ENCODE measurements at regions of chr11 and their contacts with region 1.

Region 1: DNA sequence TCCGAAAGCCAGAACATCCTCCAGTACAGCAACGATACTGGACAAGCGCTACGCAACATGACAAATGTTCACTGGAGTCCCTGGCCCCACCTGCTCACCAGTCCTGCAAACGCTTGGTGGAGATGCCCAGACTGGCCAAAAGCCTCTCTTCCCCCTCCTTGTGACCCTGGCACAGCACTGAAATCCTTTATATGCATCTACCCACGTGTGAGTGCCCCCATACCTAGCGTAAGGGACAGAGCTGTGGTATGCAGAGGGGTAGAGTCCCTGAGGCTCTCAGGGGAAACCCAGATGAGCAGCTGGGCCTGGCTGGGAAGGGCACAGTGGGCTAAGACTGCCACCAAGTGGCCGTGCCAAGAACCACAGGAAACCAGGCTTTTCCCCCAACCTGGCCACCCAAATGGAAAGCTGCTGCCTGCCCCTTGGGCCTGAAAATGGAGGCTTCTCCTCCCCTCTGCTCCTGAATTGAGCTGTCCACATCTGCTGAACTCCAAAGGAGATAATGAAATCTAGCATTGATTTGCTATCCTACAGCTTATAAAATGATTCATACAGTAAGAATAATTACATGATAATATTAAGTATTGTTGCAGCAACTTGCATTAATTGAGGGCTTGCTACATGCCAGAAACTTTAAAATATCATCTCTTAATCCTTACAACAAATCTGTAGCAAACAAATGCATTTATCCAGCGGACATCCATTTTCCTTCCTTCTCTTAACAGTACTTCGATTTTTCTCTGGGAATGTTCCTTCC is 24.8 kb upstream of the TTC12 start:
- DNase-seq: peak; percentile 78
- ATAC-seq: peak; percentile 98
- H3K4me3 ChIP-seq: no peak overlapping the region
- H3K4me3 Mint-ChIP-seq: no peak overlapping the region
- H3K27ac ChIP-seq: no peak overlapping the region
- H3K27ac Mint-ChIP-seq: no peak overlapping the region
- H3K4me1 ChIP-seq: peaks cover 0 to 5% of the 10 kb centered on the region in 2 donors
- H3K4me1 Mint-ChIP-seq: peaks cover 4% of the 10 kb centered on the region
- H3K27me3 ChIP-seq: peaks cover 0 to 8% (median 0%) of the 10 kb centered on the region in 4 experiments
- H3K27me3 Mint-ChIP-seq: peaks cover 22% of the 10 kb centered on the region
- CTCF ChIP-seq: peak; percentile 87

Region 2: DNA sequence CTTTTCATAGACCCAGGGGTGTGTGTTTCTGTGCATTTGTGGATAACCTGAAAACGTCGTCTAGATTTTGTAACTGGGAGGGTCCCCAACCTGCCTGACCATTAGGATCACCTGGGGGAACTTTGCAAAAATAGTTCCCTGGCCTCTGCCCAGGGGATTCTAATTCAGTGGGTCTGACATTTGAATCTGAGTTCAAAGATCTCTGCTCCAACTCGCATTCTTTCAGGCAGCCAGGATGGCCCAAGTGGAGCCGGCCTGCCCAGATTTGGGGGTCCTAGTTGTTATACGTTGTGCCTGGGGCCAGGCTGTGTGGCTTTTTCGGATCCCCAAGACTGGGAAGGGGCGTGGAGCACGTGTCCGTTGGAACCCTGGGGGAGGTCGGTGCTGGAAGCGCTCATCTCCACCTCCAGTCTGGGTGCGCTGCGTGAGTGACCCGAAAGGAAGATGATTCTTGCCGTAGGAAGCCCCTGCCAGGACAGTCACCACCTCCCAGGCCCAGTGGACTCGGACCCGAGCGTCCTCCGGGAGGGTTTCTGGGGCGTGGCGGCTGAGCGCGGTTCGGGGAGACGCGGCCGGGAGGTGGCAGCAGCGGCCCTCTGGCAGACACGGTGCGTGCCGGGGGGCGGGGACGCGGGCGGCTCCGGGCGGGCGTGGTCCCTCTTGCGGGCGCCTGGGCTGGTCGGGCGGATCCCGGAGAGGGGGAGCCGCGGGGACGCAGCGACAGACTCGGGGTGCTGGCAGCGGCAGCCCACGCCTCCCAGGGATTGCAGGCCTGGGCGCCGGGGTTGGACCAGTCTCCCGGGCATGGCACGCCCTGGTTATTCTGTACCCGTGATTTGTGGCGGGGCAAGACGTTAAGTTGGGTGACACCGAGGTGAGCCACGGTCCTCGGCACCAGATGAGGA is 999.8 kb before region 1 on chr11:
- CTCF ChIA-PET with region 1: interaction called, 22 read pairs
- POLR2A ChIA-PET with region 1: no interaction called
- intact Hi-C with region 1: loop called (anchors 1 kb)
- DNase-seq: peak; percentile 88
- ATAC-seq: peak; percentile 98
- H3K4me3 ChIP-seq: peak overlapping the region in 4 of 5 experiments; percentile 40 to 62 (median 53)
- H3K4me3 Mint-ChIP-seq: peak overlapping the region; percentile 87
- H3K27ac ChIP-seq: peak overlapping the region in 1 of 2 donors; percentile 39
- H3K27ac Mint-ChIP-seq: peak overlapping the region; percentile 85
- H3K4me1 ChIP-seq: peaks cover 9 to 13% of the 10 kb centered on the region in 2 donors
- H3K4me1 Mint-ChIP-seq: peaks cover 11% of the 10 kb centered on the region
- H3K27me3 ChIP-seq: peaks cover 0 to 3% (median 0%) of the 10 kb centered on the region in 4 experiments
- H3K27me3 Mint-ChIP-seq: no peaks in the 10 kb centered on the region
- CTCF ChIP-seq: peak; percentile 89

Region 3: DNA sequence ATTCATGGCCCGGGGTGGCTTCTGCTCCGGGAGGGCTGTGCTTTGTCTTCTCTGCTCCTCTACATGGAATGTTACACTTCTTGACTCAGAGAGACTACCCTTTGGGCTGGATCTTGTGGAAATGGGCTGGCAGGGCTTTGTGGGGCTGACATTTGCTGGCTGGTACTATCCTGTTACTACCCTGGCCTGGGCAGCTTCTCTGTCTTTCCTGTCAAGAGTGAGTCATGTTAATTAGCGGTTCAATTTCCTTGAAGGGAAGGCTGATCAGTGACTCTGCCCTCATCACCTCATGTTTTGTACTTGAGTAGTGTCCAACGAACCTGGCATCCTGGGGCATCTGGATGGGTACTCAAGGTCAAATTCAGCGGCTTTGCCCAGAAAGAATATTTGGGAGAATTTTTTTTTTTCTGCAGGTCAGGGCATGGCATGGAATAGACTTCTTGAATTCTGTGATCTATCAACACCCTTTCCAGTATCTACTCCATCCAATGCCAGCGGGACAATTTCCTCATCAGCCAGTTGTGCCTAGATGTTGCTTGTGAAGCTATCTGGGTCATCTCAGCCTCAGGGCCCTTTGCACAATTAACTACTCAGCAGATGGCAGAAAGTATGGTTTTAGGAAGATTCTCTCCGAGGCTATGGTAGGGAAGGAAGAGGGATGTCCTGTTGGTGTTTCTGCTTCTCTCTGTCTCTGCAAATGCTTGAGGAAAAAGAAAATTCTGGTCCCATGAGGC is 888.4 kb before region 1 on chr11:
- CTCF ChIA-PET with region 1: no interaction called
- POLR2A ChIA-PET with region 1: no interaction called
- intact Hi-C with region 1: no loop called
- DNase-seq: no peak
- ATAC-seq: no peak
- H3K4me3 ChIP-seq: no peak overlapping the region
- H3K4me3 Mint-ChIP-seq: no peak overlapping the region
- H3K27ac ChIP-seq: no peak overlapping the region
- H3K27ac Mint-ChIP-seq: no peak overlapping the region
- H3K4me1 ChIP-seq: no peaks in the 10 kb centered on the region
- H3K4me1 Mint-ChIP-seq: no peaks in the 10 kb centered on the region
- H3K27me3 ChIP-seq: peaks cover 0 to 9% (median 0%) of the 10 kb centered on the region in 4 experiments
- H3K27me3 Mint-ChIP-seq: peaks cover 3% of the 10 kb centered on the region
- CTCF ChIP-seq: no peak

Region 4: GRCh38 chr11:112588252-112588694 is 701.3 kb before region 1 on chr11:
- CTCF ChIA-PET with region 1: interaction called, 122 read pairs
- POLR2A ChIA-PET with region 1: no interaction called
- intact Hi-C with region 1: no loop called
- DNase-seq: peak; percentile 60
- ATAC-seq: peak; percentile 47
- H3K4me3 ChIP-seq: no peak overlapping the region
- H3K4me3 Mint-ChIP-seq: no peak overlapping the region
- H3K27ac ChIP-seq: no peak overlapping the region
- H3K27ac Mint-ChIP-seq: no peak overlapping the region
- H3K4me1 ChIP-seq: no peaks in the 10 kb centered on the region
- H3K4me1 Mint-ChIP-seq: peaks cover 2% of the 10 kb centered on the region
- H3K27me3 ChIP-seq: peaks cover 0 to 2% (median 1%) of the 10 kb centered on the region in 4 experiments
- H3K27me3 Mint-ChIP-seq: peaks cover 10% of the 10 kb centered on the region
- CTCF ChIP-seq: peak; percentile 75

Region 5: DNA sequence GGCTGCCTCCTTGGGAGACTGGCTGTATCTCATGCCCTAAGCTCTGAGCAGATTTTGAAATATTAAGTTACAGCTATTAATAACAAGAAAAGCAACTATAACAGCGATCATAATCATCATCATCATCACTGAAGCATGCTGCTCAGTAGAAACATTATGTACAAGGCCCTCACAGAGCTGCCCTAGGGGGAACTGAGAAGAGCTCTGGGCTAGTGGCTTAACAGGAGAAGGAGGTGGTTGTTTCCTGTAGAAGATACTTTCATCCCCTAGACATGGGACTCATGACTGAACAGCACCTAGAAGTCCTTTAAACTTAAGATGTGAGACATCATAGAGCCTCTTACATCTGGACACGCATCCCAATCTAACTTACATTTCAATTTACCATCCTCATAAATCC is 696.2 kb before region 1 on chr11:
- CTCF ChIA-PET with region 1: interaction called, 122 read pairs
- POLR2A ChIA-PET with region 1: no interaction called
- intact Hi-C with region 1: no loop called
- DNase-seq: no peak
- ATAC-seq: no peak
- H3K4me3 ChIP-seq: no peak overlapping the region
- H3K4me3 Mint-ChIP-seq: no peak overlapping the region
- H3K27ac ChIP-seq: no peak overlapping the region
- H3K27ac Mint-ChIP-seq: no peak overlapping the region
- H3K4me1 ChIP-seq: no peaks in the 10 kb centered on the region
- H3K4me1 Mint-ChIP-seq: no peaks in the 10 kb centered on the region
- H3K27me3 ChIP-seq: peaks cover 0 to 6% (median 2%) of the 10 kb centered on the region in 4 experiments
- H3K27me3 Mint-ChIP-seq: peaks cover 11% of the 10 kb centered on the region
- CTCF ChIP-seq: no peak

Region 6: GRCh38 chr11:113332023-113332422 is 42.4 kb after region 1 on chr11:
- CTCF ChIA-PET with region 1: no interaction called
- POLR2A ChIA-PET with region 1: no interaction called
- intact Hi-C with region 1: no loop called
- DNase-seq: no peak
- ATAC-seq: no peak
- H3K4me3 ChIP-seq: no peak overlapping the region
- H3K4me3 Mint-ChIP-seq: no peak overlapping the region
- H3K27ac ChIP-seq: no peak overlapping the region
- H3K27ac Mint-ChIP-seq: no peak overlapping the region
- H3K4me1 ChIP-seq: no peaks in the 10 kb centered on the region
- H3K4me1 Mint-ChIP-seq: no peaks in the 10 kb centered on the region
- H3K27me3 ChIP-seq: no peaks in the 10 kb centered on the region
- H3K27me3 Mint-ChIP-seq: no peaks in the 10 kb centered on the region
- CTCF ChIP-seq: no peak

Region 7: DNA sequence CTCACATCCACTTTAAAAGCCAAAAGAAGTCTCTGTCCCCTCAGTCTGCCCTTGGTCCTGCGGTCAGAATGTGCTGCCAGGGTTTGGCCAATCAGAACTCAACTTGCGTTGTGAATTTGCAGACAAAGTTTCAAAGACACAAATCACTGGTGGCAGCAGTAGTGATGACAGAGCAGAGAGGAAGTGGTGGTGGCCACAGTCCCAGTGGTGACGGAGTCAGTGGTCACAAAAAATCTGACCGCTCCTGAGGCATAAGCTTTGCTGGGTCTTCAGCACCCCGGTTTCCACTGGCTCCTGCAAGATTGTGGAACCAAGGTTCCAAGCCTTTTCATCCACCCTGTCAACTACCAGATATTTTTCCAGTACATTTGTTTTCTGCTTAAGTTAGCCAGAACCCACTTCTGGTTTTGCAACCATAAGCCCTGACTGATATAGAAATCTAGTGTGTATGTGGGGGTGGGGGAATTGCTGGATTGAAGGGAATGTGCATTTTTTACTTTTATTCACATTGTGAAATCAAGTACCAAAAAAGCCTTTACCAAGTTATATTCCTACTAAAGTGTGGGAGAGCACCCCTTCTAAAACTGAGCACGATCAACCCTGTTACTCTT is 304.2 kb after region 1 on chr11:
- CTCF ChIA-PET with region 1: no interaction called
- POLR2A ChIA-PET with region 1: no interaction called
- intact Hi-C with region 1: no loop called
- DNase-seq: no peak
- ATAC-seq: no peak
- H3K4me3 ChIP-seq: no peak overlapping the region
- H3K4me3 Mint-ChIP-seq: no peak overlapping the region
- H3K27ac ChIP-seq: no peak overlapping the region
- H3K27ac Mint-ChIP-seq: no peak overlapping the region
- H3K4me1 ChIP-seq: no peaks in the 10 kb centered on the region
- H3K4me1 Mint-ChIP-seq: no peaks in the 10 kb centered on the region
- H3K27me3 ChIP-seq: peaks cover 0 to 9% (median 2%) of the 10 kb centered on the region in 4 experiments
- H3K27me3 Mint-ChIP-seq: peaks cover 32% of the 10 kb centered on the region
- CTCF ChIP-seq: no peak

Measured in B cell (primary cell).